ENCODE measurements at regions of chr11 and their contacts with region 1.

Region 1: GRCh38 chr11:5600374-5600851 is 4.0 kb downstream of the TRIM6 start:
- DNase-seq: peak; percentile 23
- ATAC-seq: peak; percentile 98
- H3K4me3 ChIP-seq: no peak overlapping the region
- H3K27ac ChIP-seq: no peak overlapping the region
- H3K4me1 ChIP-seq: no peaks in the 10 kb centered on the region; the same call in 1 of the 2 replicates
- H3K27me3 ChIP-seq: no peaks in the 10 kb centered on the region
- CTCF ChIP-seq: peak; percentile 80 to 94 (median 87)
- EP300 ChIP-seq: no peak
- POLR2A ChIP-seq: no peak
- RAD21 ChIP-seq: peak; percentile 84

Region 2: DNA sequence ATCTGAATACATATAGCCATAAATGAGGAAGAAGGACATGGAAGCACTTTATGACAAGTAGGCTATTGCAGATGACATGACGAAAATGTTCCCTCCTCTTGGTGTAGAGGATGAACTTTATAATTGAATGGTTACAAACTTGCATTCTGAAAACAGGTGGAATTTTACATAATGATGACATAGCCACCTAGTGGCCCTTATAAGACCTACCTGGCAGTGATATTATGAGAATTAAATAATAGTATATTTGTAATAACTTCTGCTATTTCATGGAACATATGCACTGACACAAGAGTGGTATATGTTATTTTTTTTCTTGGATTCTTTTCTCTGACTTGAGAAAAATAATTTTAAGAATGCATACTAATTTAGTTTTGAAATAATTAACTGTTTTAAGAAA is 112.1 kb after region 1 on chr11:
- CTCF ChIA-PET with region 1: interaction called, 8 read pairs
- POLR2A ChIA-PET with region 1: interaction called, 3 read pairs
- RAD21 ChIA-PET with region 1: interaction called, 3 read pairs
- SMC1A ChIA-PET with region 1: interaction called, 3 read pairs
- in situ Hi-C with region 1: no loop called
- intact Hi-C with region 1: loop called (anchors 1 kb)
- DNase-seq: no peak
- ATAC-seq: peak; percentile 72
- H3K4me3 ChIP-seq: no peak overlapping the region
- H3K27ac ChIP-seq: no peak overlapping the region
- H3K4me1 ChIP-seq: no peaks in the 10 kb centered on the region
- H3K27me3 ChIP-seq: no peaks in the 10 kb centered on the region
- CTCF ChIP-seq: peak; percentile 24 to 60 (median 50); a peak in 4 of 6 replicates
- EP300 ChIP-seq: no peak
- POLR2A ChIP-seq: no peak
- RAD21 ChIP-seq: peak; percentile 58

Region 3: GRCh38 chr11:5891216-5891800 is 290.9 kb after region 1 on chr11:
- CTCF ChIA-PET with region 1: interaction called, 6 read pairs
- POLR2A ChIA-PET with region 1: no interaction called
- RAD21 ChIA-PET with region 1: interaction called, 5 read pairs
- SMC1A ChIA-PET with region 1: interaction called, 4 read pairs
- in situ Hi-C with region 1: no loop called
- intact Hi-C with region 1: loop called (anchors 2 kb)
- DNase-seq: peak; percentile 0
- ATAC-seq: no peak; the same call in 2 of the 3 replicates
- H3K4me3 ChIP-seq: no peak overlapping the region
- H3K27ac ChIP-seq: no peak overlapping the region
- H3K4me1 ChIP-seq: no peaks in the 10 kb centered on the region
- H3K27me3 ChIP-seq: no peaks in the 10 kb centered on the region
- CTCF ChIP-seq: peak; percentile 8 to 38 (median 22); a peak in 4 of 6 replicates
- EP300 ChIP-seq: no peak
- POLR2A ChIP-seq: no peak
- RAD21 ChIP-seq: peak; percentile 53